Head of caudate nucleus (tissue), 42 donors: ENCODE measurements at regions of chr9 and their contacts with region 1.

Region 1: DNA sequence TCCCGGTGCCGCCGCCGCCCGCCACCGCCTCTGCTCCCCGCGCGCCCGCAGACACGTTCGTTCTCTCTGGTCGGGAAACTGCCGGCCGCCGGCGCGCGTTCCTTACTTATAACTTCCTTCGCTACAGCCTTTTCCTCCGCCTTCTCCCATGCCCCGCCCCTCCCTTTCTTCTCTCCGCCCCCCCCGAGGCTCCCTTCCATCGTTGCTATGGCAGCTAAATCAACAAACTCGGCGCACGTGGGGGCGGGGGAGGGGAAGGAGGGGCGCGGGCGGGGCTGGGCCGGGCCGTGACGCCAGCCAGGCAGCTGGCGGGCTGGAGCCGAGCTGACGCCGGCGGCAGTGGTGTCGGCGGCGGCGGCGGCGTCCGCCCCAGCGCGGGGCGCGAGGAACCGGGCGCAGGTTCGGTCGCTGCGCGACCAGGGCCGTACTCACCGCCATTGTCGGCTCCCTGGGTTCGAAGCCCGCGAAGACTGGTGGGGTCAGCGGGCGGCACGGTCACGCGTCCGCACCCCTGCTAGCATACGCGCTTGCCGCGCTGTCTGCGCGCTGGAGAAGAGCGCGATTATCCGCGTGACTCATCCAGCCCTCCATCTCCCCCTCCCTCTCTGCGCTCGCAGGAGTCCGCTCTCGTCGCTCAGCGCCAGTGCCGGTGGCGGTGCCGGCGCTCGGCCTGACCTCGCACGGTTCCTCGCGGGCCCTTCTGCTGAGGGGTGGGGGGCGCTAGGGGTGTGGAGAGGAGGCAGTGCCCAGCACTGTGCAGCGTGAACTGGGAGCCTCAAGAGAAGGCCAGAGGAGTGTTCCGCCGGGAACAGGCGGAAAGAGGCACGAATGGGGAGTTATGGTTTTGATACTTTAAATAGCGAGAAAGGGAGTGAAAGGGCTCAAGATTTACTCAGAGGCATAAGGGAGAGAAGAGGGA is at the start of gene KLF4:
- DNase-seq: peak; percentile 66 to 95 (median 86)

Region 2: DNA sequence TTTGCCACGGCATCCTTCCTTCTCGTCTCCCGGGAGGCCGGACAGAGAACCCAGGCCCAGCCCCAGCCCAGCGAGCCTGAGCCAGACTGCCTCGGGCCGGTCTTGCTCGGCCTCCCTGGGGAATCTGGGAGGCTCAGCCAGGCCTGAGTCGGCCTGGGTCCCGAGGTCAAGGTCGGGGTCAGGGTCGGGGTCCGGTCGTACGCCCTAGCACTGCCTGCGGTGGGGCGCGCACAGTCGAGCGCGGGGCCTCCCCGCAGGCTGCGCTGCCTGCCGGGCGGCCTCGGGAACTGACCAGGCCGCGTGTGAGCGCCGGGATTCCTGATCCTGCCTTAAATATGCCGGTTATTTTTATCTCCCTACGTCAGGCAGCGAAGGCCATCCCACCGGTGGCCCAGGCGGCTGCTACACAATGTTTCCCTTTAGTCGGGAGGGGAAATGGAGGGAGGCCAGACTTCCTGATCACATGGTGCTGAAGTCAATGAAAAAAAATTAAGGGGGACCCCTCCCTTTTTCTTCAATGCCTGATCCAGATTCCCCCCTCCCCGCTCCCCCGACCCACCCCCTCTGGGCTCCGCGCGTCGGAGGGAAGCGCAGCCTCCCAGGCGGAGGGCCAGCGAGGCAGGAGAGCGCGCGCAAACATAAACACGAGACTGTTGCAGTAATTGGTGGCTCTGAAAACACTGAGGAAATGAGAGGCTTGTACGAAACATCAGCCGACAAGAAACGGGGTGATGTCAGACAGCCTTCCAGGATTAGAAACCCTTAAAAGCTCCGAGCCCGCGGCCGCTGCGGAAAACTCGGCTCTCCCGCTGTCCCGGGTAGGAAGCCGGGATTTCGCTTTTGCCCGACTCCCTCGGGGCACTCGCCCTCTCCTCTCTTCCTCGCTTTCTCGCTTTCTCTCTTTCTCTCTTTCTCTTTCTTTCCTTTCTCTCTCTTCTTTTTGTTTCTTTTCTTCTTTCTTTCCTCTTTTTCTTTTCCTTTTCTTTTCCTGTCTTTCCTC is 147.8 kb after region 1 on chr9:
- intact Hi-C with region 1: loop called (anchors 5 kb)
- DNase-seq: peak; percentile 40 to 91 (median 74)

Region 3: DNA sequence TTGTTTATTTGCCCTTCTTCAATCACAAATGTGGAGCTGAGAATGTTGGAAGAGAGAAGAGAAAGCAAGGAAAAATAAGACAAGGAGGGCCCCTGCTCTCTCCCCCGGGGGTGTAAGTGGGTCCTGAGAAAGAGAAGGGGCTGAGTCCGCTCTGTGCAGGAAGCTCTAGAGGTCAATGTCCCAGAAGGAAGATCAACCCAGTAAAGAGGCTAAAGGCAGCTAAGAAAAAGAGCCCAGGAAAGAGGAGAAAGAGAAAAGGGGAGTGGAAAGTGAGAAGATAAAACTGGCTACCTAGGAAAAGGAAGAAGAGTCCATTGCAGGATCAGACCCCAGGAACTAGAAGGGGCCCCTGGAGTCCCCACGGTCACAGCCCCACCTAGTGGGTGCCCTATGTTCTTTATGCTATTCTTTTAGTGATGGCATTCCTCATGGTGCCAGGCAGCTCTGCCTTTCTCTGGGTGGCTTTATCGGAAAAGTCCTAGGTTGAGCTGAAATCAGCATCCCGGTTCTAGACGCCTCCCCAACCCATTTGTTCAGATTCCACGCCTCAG is 782.5 kb after region 1 on chr9:
- intact Hi-C with region 1: loop called (anchors 5 kb)
- DNase-seq: peak in 41 of 42 donors; percentile 17 to 87 (median 63)

Region 4: DNA sequence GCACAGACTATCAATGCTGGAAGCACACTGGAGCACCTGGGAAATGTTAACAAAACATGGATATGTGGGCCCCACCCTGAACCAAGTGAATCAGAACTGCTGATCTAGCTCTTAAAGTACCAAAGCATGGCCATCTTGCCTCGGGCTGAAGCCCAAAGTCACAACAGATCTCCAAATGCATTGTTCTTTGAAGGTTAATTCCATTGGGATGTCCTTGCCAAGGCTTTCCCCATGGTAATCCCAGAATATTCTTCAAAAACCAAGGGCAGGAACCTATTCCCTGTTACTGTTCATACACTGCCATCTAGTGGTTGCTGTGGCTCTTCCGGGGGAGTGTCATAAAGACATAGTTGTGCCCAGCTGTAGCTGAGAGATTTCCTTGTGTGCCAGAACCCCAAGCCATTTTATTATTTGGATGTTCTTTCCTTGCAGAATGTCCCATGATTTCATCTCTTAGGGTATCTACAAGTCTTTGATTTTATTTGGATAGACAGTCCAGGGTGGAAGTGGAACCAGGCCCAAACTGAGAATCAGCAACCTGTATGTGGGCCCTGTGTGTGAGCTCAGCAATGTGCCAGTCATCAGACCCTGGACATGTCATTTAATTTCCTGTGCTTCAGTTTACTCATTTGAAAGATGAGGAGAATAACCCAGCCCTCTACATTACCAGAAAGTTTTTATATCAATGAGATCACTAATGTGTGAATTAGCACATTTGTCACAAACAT is 1075.9 kb after region 1 on chr9:
- intact Hi-C with region 1: loop called (anchors 10 kb)
- DNase-seq: peak in 41 of 42 donors; percentile 5 to 81 (median 57)